Gastrocnemius medialis (tissue), 4 donors: ENCODE measurements at regions of chr1 and their contacts with region 1.

Region 1: GRCh38 chr1:209860293-209860881 is 32.6 kb downstream of the UTP25 start:
- DNase-seq: peak; percentile 19 to 45
- ATAC-seq: peak in 1 of 2 donors; percentile 60
- H3K4me3 ChIP-seq: no peak overlapping the region
- H3K27ac ChIP-seq: no peak overlapping the region
- H3K4me1 ChIP-seq: no peaks in the 10 kb centered on the region
- H3K27me3 ChIP-seq: peaks cover 0 to 4% (median 0%) of the 10 kb centered on the region in 3 donors
- CTCF ChIP-seq: peak; percentile 46 to 84 (median 52)
- POLR2A ChIP-seq: no peak

Region 2: GRCh38 chr1:209989525-209989924 is 129.1 kb after region 1 on chr1:
- in situ Hi-C with region 1: loop called in 1 of 4 experiments (anchors 10 kb)
- intact Hi-C with region 1: loop called (anchors 5 kb)
- DNase-seq: no peak
- ATAC-seq: no peak
- H3K4me3 ChIP-seq: no peak overlapping the region
- H3K27ac ChIP-seq: no peak overlapping the region
- H3K4me1 ChIP-seq: no peaks in the 10 kb centered on the region
- H3K27me3 ChIP-seq: no peaks in the 10 kb centered on the region
- CTCF ChIP-seq: peak in 1 of 5 experiments; percentile 20
- POLR2A ChIP-seq: no peak

Region 3: DNA sequence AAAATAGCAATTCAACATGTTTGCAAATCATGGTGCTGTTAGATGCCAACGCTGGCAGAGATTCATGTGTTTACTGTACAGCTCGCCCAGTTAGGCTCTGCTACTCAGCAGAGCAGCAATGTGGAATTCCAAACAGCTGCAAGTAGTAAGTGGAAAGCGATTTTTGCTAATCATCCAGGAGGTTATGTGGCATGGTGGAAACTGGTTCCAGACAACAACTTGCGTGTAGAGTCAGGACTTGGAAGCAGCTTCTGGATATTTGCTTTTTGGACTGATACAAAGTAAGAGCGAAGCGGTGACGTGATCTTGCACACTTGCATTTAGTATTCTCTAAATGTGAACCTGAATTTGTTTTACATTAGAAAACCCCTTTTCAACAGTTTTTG is 441.2 kb after region 1 on chr1:
- in situ Hi-C with region 1: loop called (anchors 25 kb)
- intact Hi-C with region 1: no loop called
- DNase-seq: no peak
- ATAC-seq: peak in 1 of 2 donors; percentile 46
- H3K4me3 ChIP-seq: no peak overlapping the region
- H3K27ac ChIP-seq: no peak overlapping the region
- H3K4me1 ChIP-seq: peaks cover 25% of the 10 kb centered on the region in 2 donors
- H3K27me3 ChIP-seq: no peaks in the 10 kb centered on the region
- CTCF ChIP-seq: no peak
- POLR2A ChIP-seq: no peak